CD8-positive, alpha-beta memory T cell (primary cell): ENCODE measurements at regions of chr21 and their contacts with region 1.

Region 1: DNA sequence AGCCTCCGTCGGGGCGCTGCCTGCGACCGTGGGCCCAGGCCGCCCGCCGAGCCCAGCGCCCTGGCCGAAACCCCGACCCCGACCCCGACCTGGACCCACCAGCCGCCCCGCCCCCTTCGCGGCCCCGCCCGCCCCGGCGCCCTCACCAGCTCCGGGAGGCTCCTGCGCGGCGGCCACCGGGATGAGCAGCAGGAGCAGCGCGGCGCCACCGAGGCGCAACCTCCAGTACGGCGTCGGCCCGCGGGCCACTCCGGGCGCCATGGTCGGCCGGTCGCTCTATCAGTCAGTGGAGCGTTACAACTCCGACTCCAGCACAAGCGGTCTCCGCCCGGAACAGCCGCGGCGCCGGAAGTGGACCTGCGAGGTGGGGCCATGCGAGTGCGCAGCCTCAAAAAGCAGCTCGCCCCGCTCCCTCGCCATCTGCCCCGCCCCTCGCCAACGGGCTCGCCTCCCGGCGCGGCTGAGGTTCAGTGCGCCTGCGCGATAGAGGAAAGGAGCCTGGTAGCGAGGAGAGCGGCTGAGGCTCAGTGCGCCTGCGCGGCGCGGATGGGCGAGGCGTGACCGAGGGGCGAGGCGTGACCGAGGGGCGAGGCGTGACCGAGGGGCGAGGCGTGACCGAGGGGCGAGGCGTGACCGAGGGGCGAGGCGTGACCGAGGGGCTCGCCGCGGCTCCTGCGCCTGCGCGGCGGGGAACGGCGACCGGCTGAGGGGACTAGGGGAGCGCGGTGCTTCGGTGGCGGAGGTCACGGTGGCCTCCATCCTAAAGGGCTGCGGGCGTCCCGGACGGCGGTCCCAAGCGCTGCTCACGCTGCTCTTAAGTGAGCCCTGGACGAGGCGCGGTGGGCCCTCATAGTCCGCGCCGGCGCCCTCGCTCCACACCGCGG is at the start of gene PTTG1IP:
- DNase-seq: peak; percentile 99 to 100 (median 99)
- H3K4me3 ChIP-seq: peak within 1 kb of the TSS; percentile 74
- H3K4me3 Mint-ChIP-seq: peak within 1 kb of the TSS; percentile 93 to 97 (median 94)
- H3K27ac ChIP-seq: peak within 1 kb of the TSS; percentile 74
- H3K27ac Mint-ChIP-seq: peak within 1 kb of the TSS; percentile 91 to 99 (median 95)
- H3K4me1 ChIP-seq: peaks cover 48% of the 10 kb centered on the region
- H3K4me1 Mint-ChIP-seq: peaks cover 53 to 65% (median 62%) of the 10 kb centered on the region in 3 donors
- H3K27me3 ChIP-seq: no peaks in the 10 kb centered on the region
- H3K27me3 Mint-ChIP-seq: no peaks in the 10 kb centered on the region
- total RNA-seq, gene PTTG1IP: 48.2 to 50.8 TPM

Region 2: GRCh38 chr21:44801468-44802395 is 71.9 kb before region 1 on chr21 and contains the start of gene UBE2G2:
- CTCF ChIA-PET with region 1: interaction called, 14 read pairs
- POLR2A ChIA-PET with region 1: interaction called, 10 read pairs
- DNase-seq: peak; percentile 77 to 89 (median 83)
- H3K4me3 ChIP-seq: peak within 1 kb of the TSS; percentile 68
- H3K4me3 Mint-ChIP-seq: peak within 1 kb of the TSS; percentile 94 to 99 (median 98)
- H3K27ac ChIP-seq: peak within 1 kb of the TSS; percentile 55
- H3K27ac Mint-ChIP-seq: peak within 1 kb of the TSS; percentile 88 to 98 (median 94)
- H3K4me1 ChIP-seq: peaks cover 28% of the 10 kb centered on the region
- H3K4me1 Mint-ChIP-seq: peaks cover 32 to 54% (median 44%) of the 10 kb centered on the region in 3 donors
- H3K27me3 ChIP-seq: no peaks in the 10 kb centered on the region
- H3K27me3 Mint-ChIP-seq: no peaks in the 10 kb centered on the region
- total RNA-seq, gene UBE2G2: 112 to 116 TPM

Region 3: GRCh38 chr21:44817506-44817880 is 56.1 kb before region 1 on chr21:
- CTCF ChIA-PET with region 1: interaction called, 3 read pairs
- POLR2A ChIA-PET with region 1: interaction called, 25 read pairs
- DNase-seq: peak; percentile 89 to 95 (median 92)
- H3K4me3 ChIP-seq: peak overlapping the region; percentile 62
- H3K4me3 Mint-ChIP-seq: peak overlapping the region; percentile 50 to 85 (median 60)
- H3K27ac ChIP-seq: no peak overlapping the region
- H3K27ac Mint-ChIP-seq: no peak overlapping the region
- H3K4me1 ChIP-seq: peaks cover 11% of the 10 kb centered on the region
- H3K4me1 Mint-ChIP-seq: peaks cover 8 to 23% (median 9%) of the 10 kb centered on the region in 3 donors
- H3K27me3 ChIP-seq: no peaks in the 10 kb centered on the region
- H3K27me3 Mint-ChIP-seq: no peaks in the 10 kb centered on the region

Region 4: GRCh38 chr21:44836666-44837471 is 36.7 kb before region 1 on chr21:
- CTCF ChIA-PET with region 1: no interaction called
- POLR2A ChIA-PET with region 1: no interaction called
- DNase-seq: no peak
- H3K4me3 ChIP-seq: no peak overlapping the region
- H3K4me3 Mint-ChIP-seq: no peak overlapping the region
- H3K27ac ChIP-seq: no peak overlapping the region
- H3K27ac Mint-ChIP-seq: no peak overlapping the region
- H3K4me1 ChIP-seq: no peaks in the 10 kb centered on the region
- H3K4me1 Mint-ChIP-seq: no peaks in the 10 kb centered on the region
- H3K27me3 ChIP-seq: no peaks in the 10 kb centered on the region
- H3K27me3 Mint-ChIP-seq: peaks cover under 1 to 16% of the 10 kb centered on the region in 2 donors